Cardiac septum (tissue), 1 donor: ENCODE measurements at regions of chr7 and their contacts with region 1.

Region 1: DNA sequence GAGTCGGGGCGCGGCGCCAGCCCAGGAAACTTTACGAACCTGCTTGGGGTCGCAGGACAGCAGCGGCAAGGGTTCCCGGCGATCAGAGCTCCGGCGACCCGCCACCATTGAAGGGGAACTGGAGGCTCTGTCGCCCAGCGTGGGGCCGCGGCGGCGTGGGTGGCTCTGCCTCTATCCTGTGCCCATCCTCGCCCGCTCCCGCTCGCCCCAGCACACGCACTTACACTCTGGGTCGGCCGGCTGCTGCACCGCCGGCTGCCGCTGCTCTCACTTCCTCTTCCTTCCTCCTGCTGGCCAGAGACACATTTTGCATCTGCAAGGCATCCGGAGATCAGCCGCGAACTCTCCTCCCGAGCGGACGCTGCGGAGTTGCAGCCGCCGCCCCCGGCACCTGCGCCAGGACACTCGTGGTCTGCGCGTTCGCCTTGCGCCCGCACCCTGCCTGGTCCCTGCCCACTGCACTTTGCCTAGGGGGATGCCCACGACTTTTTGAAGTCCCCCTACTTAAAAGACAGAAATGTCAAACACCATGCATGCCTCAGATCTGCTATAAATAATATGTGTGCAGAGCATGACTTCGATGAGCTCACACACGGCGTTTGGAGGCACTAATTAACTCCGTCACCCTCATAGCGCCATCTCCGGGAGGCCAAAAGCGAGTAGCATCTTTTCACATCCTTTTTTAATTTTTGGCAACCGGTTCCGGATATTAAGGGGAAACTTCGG is at the start of gene ELMO1:
- DNase-seq: peak; percentile 92
- total RNA-seq, gene ELMO1: 11.4 TPM

Region 2: DNA sequence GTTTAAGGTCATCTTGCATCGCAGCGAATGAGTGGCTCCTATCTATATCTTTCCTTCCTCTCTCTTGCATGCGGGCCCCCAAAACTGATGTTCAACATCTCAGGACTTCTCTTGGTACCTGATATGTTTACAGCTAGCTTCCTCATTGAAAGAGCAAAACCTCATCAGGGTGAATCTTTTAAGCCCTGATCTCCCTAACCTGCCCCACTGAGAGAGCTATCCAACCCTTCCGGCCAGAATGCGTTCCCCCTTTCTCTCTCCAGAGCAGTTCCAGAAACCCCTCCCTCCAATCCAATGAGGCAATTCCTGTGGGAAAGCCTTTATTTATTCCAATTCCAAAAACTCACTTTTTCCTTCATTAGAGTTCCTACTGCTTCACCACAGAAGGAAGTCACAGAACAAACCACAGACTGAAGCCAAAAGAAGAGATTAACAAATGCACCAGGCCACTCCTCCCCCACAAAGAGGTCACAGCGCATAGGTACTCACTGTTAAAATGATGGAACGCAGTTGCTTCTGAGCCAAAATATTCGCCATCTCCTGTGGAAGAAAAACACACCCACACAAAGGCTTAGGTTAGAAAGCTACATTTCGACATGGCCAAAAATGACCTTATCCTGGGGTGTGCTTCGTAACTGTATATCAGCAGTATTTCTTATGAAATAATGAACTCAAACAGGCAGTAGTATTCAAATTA is 232.5 kb before region 1 on chr7:
- intact Hi-C with region 1: loop called (anchors 5 kb)
- DNase-seq: no peak

Region 3: GRCh38 chr7:37385787-37386186 is 63.0 kb before region 1 on chr7:
- intact Hi-C with region 1: loop called (anchors 5 kb)
- DNase-seq: no peak

Region 4: GRCh38 chr7:37408291-37409228 is 40.2 kb before region 1 on chr7:
- intact Hi-C with region 1: loop called (anchors 5 kb)
- DNase-seq: no peak

Region 5: GRCh38 chr7:37495574-37496184 is 46.9 kb after region 1 on chr7:
- intact Hi-C with region 1: loop called (anchors 5 kb)
- DNase-seq: no peak

Region 6: DNA sequence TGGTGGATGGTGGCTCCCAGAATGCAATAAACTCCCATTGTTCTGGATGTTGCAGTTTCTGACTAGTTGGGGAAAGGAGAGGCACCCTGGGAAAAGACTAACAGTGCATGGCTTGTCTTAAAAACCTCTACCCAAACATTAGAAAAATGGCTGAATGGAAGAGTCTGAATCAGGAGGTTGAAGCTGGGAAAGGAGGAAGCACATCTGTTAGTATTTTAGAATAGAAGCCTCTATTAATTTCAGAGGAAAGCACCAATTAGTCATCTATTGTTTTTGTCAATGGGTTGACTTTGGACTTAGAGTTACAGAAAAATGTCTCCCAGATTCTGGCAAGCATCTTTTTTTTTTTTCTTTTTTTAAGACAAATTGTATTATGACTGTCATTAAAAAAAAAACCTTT is 56.0 kb after region 1 on chr7:
- intact Hi-C with region 1: loop called (anchors 2 kb)
- DNase-seq: no peak